CD14-positive monocyte (primary cell): ENCODE measurements at regions of chr10 and their contacts with region 1.

Region 1: GRCh38 chr10:79347226-79347893 is at the start of gene PPIF:
- DNase-seq: peak; percentile 91 to 94 (median 93)
- H3K4me3 ChIP-seq: peak within 1 kb of the TSS; percentile 59 to 88 (median 83)
- H3K4me3 Mint-ChIP-seq: peak within 1 kb of the TSS; percentile 91 to 92
- H3K27ac ChIP-seq: peak within 1 kb of the TSS; percentile 96 to 99
- H3K27ac Mint-ChIP-seq: peak within 1 kb of the TSS; percentile 96 to 98 (median 97)
- H3K4me1 ChIP-seq: peaks cover 72 to 83% of the 10 kb centered on the region in 2 donors
- H3K4me1 Mint-ChIP-seq: peaks cover 66% of the 10 kb centered on the region
- H3K27me3 ChIP-seq: no peaks in the 10 kb centered on the region
- H3K27me3 Mint-ChIP-seq: peaks cover 1 to 4% (median 4%) of the 10 kb centered on the region in 3 donors
- CTCF ChIP-seq: peak; percentile 99
- polyA plus RNA-seq, gene PPIF: 36.6 to 1,064 (median 52.3) TPM

Region 2: GRCh38 chr10:78865538-78865875 is 481.9 kb before region 1 on chr10:
- intact Hi-C with region 1: no loop called
- DNase-seq: no peak
- H3K4me3 ChIP-seq: no peak overlapping the region
- H3K4me3 Mint-ChIP-seq: no peak overlapping the region
- H3K27ac ChIP-seq: no peak overlapping the region
- H3K27ac Mint-ChIP-seq: peak overlapping the region in 1 of 7 donors; percentile 27
- H3K4me1 ChIP-seq: no peaks in the 10 kb centered on the region
- H3K4me1 Mint-ChIP-seq: peaks cover 3% of the 10 kb centered on the region
- H3K27me3 ChIP-seq: peaks cover 0 to 2% of the 10 kb centered on the region in 2 donors
- H3K27me3 Mint-ChIP-seq: peaks cover 10 to 26% (median 11%) of the 10 kb centered on the region in 3 donors
- CTCF ChIP-seq: no peak

Region 3: DNA sequence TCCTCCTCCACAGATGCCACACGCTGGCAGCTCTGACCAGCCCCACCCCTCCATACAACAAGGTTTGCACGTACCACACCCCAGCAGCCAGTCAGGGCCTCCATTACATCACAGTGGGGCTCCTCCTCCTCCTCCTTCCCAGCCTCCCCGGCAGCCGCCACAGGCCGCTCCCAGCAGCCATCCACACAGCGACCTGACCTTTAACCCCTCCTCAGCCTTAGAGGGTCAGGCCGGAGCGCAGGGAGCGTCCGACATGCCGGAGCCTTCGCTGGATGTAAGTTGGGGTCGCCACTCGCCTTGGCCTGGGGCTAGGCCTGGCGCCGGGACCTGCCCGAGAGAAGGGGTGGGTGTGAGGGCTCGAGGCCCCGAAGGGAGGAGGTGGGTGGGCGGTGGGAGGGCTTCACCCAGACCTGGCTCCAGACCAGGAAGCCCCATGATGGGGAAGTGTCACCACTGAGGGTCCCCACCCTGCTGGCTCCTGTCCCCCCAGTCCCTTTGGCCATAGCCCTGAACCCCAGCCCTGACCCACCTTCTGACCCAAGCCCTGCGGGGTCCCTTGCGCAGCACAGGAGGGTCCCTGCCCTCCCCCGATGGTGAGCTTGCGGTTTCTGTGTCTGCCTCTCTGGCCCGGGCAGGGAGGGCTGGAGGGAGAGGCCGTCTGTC is 36.3 kb before region 1 on chr10:
- intact Hi-C with region 1: loop called (anchors 5 kb)
- DNase-seq: no peak
- H3K4me3 ChIP-seq: no peak overlapping the region
- H3K4me3 Mint-ChIP-seq: no peak overlapping the region
- H3K27ac ChIP-seq: no peak overlapping the region
- H3K27ac Mint-ChIP-seq: peak overlapping the region in 1 of 7 donors; percentile 66
- H3K4me1 ChIP-seq: peaks cover 11 to 16% of the 10 kb centered on the region in 2 donors
- H3K4me1 Mint-ChIP-seq: peaks cover 18% of the 10 kb centered on the region
- H3K27me3 ChIP-seq: no peaks in the 10 kb centered on the region
- H3K27me3 Mint-ChIP-seq: peaks cover 0 to 3% (median 0%) of the 10 kb centered on the region in 3 donors
- CTCF ChIP-seq: no peak

Region 4: DNA sequence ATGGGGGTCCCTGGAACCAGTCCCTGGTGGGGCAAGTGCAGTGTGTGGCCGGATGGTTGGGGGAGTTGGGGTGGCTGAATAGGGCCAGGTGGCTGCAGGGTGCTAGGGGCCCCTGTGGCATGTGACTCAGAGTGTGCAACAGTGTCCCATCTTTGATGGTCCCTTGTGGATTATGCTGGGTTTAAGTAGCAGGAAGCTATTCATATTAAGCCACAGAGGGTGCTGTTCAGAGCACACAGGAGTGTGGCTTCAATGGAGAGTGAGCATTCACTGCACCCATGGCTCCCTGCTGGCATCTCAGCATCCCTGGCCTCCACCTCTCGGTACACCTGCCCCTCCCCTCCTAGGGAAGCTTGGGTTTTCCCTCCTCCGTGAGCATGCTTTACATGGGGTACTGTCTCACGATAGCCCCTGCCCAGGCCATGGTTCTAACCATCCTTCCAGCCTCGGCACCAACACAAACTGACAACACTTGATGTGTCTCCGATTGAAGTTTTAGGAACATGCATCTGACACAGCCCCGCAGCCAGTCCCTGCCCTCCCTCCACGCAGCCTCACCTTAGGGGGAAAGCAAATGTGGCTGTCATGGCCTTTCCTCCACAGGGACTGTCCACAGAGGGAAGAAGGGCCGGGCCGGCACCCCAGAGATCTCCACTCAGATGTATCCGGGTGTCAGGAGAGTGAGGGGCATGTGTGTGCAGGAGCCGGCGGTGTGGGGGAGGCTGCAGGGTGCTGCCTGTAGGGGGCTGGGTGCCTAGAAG is 30.5 kb before region 1 on chr10:
- intact Hi-C with region 1: loop called (anchors 5 kb)
- DNase-seq: peak in 2 of 3 donors; percentile 44 to 54
- H3K4me3 ChIP-seq: no peak overlapping the region
- H3K4me3 Mint-ChIP-seq: peak overlapping the region; percentile 6 to 60
- H3K27ac ChIP-seq: no peak overlapping the region
- H3K27ac Mint-ChIP-seq: peak overlapping the region in 6 of 7 donors; percentile 82 to 99 (median 98)
- H3K4me1 ChIP-seq: peaks cover 54 to 57% of the 10 kb centered on the region in 2 donors
- H3K4me1 Mint-ChIP-seq: peaks cover 55% of the 10 kb centered on the region
- H3K27me3 ChIP-seq: peaks cover 0 to 5% of the 10 kb centered on the region in 2 donors
- H3K27me3 Mint-ChIP-seq: peaks cover 7 to 26% (median 19%) of the 10 kb centered on the region in 3 donors
- CTCF ChIP-seq: no peak

Region 5: GRCh38 chr10:79331709-79332108 is 15.7 kb before region 1 on chr10:
- intact Hi-C with region 1: loop called in 1 of 2 experiments (anchors 2 kb)
- DNase-seq: peak; percentile 98 to 100 (median 99)
- H3K4me3 ChIP-seq: no peak overlapping the region
- H3K4me3 Mint-ChIP-seq: peak overlapping the region; percentile 25 to 53
- H3K27ac ChIP-seq: peak overlapping the region; percentile 89 to 92
- H3K27ac Mint-ChIP-seq: peak overlapping the region; percentile 94 to 98 (median 98)
- H3K4me1 ChIP-seq: peaks cover 22 to 24% of the 10 kb centered on the region in 2 donors
- H3K4me1 Mint-ChIP-seq: peaks cover 27% of the 10 kb centered on the region
- H3K27me3 ChIP-seq: no peaks in the 10 kb centered on the region
- H3K27me3 Mint-ChIP-seq: peaks cover 5 to 9% (median 6%) of the 10 kb centered on the region in 3 donors
- CTCF ChIP-seq: no peak

Region 6: DNA sequence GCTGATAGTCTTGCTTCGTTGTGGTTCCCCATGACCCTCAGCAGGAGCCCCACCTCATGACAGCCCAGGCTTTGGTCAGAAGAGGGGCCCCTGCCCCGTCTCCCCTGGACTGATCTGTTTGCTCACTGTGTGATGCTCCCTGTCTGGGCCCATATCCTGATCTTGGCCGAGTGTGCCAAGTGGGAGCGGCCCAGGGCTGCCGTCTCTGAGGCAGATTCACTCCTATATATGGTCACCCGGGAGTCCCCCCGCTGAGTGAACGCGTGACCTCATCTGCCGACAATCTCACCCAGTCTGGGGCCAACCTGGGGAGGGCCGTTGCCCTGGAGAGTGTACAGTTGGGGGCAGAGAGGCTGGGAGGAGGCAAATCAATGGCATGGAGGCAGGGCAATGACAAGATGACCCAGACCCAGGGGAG is 34.5 kb after region 1 on chr10:
- intact Hi-C with region 1: no loop called
- DNase-seq: peak in 1 of 3 donors; percentile 2
- H3K4me3 ChIP-seq: no peak overlapping the region
- H3K4me3 Mint-ChIP-seq: no peak overlapping the region
- H3K27ac ChIP-seq: no peak overlapping the region
- H3K27ac Mint-ChIP-seq: no peak overlapping the region
- H3K4me1 ChIP-seq: no peaks in the 10 kb centered on the region
- H3K4me1 Mint-ChIP-seq: no peaks in the 10 kb centered on the region
- H3K27me3 ChIP-seq: no peaks in the 10 kb centered on the region
- H3K27me3 Mint-ChIP-seq: peaks cover 1 to 7% (median 2%) of the 10 kb centered on the region in 3 donors
- CTCF ChIP-seq: no peak